ENCODE measurements at regions of chr12 and their contacts with region 1.

Region 1: DNA sequence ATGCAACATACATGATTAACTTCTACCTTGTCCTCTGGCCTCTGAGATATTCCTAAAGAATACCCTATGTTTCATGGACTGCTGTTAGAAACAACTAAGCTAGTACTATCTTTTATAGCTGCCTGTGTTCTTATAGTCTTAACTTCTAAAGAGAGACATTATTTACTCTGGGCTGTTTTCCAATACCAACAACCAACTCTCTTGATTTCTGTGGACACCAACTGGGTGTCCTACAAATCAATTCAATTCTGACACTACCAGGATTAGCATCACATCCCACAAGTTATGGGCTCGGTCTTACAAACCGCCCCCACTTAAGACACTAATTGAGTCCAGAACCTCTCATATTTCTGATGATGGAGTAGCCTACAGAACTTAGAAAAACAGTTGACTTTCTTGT is 8.3 kb downstream of the XPOT start:
- DNase-seq: no peak
- ATAC-seq: no peak
- H3K4me3 ChIP-seq: no peak overlapping the region
- H3K27ac ChIP-seq: no peak overlapping the region
- H3K4me1 ChIP-seq: peaks cover 3% of the 10 kb centered on the region in 2 donors
- H3K27me3 ChIP-seq: no peaks in the 10 kb centered on the region
- CTCF ChIP-seq: no peak
- POLR2A ChIP-seq: no peak

Region 2: DNA sequence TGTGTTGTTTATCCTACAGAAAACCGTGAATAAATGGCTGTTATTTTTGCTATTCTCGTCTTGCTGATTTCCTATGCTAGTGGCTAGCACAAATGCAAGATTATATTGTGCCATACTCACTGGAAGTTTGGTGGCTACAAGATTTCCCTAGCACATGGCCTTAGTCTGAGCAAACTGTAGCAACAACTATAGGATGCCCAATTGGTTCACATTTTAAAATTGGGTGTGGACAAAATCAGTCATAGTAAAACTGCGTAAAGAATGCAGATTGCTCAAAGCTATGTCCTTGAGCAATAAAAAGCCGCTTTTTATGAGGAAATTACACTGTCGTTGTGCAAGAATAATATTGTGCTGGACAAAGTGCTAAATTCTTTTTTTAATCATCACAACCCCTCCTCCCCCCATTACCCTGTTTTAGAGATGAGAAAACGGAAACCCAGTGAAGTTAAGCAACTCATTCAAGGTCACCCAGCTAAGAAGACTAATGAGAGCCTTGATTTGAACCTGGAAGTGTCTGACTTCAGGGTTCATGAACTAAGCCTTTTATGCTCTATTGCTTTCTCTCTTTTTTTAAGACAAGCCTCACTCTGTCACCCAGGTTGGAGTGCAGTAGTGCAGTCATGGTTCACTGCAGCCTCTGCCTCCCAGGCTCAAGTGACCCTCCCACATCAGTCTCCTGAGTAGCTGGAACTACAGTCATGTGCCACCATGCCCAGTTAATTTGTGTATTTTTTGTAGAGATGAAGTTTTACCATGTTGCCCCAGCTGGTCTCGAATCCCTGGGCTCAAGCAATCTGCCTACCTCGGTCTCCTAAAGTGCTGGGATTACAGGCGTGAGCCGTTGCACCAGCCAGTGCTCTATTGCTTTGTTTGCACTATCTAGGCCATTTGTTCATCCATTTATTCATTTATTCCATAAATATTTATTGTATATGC is 494.3 kb before region 1 on chr12:
- in situ Hi-C with region 1: no loop called
- intact Hi-C with region 1: no loop called
- DNase-seq: no peak
- ATAC-seq: peak; percentile 52 to 71
- H3K4me3 ChIP-seq: no peak overlapping the region
- H3K27ac ChIP-seq: no peak overlapping the region
- H3K4me1 ChIP-seq: no peaks in the 10 kb centered on the region
- H3K27me3 ChIP-seq: no peaks in the 10 kb centered on the region
- CTCF ChIP-seq: no peak
- POLR2A ChIP-seq: peak in 1 of 2 donors; percentile 9

Region 3: DNA sequence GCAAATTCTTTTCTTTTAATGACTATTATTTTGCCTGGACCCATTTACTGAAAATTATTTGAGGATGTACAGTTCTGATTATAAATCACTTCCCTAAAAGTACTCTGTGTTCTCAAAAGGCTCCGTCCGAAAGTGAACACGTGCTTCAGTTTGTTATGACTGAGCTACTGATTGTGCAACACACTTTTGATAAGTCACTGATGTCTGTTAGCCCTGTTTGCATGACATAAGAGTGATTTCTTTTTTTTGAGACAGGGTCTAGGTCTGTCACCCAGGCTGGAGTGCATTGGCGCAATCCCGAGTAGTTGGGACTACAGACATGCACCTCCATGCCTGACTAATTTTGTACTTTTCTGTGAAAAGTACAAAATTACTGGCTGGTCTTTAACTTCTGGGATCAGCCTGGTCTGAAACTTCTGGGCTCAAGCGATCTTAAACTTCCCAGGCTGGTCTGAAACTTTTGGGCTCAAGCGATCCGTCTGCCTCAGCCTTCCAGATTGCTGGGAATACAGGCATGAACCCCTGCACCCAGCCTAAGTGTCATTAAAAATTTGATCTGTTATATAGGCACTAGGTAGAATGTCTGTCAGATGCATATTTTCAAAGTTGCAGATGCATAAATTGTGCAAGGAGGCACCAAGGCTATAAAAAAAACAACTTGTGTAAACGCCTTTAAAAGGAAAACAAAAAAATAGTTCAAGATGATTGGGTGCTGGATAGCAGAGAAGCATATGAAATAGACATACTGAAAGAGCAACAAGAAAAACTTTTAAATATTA is 456.4 kb before region 1 on chr12:
- in situ Hi-C with region 1: no loop called
- intact Hi-C with region 1: no loop called
- DNase-seq: peak; percentile 45 to 53
- ATAC-seq: peak; percentile 92 to 94
- H3K4me3 ChIP-seq: no peak overlapping the region
- H3K27ac ChIP-seq: peak overlapping the region; percentile 39 to 69 (median 52)
- H3K4me1 ChIP-seq: peaks cover 0 to 10% of the 10 kb centered on the region in 2 donors
- H3K27me3 ChIP-seq: no peaks in the 10 kb centered on the region
- CTCF ChIP-seq: no peak
- POLR2A ChIP-seq: no peak

Region 4: GRCh38 chr12:64273527-64274403 is 138.7 kb before region 1 on chr12:
- in situ Hi-C with region 1: no loop called
- intact Hi-C with region 1: no loop called
- DNase-seq: no peak
- ATAC-seq: no peak
- H3K4me3 ChIP-seq: no peak overlapping the region
- H3K27ac ChIP-seq: no peak overlapping the region
- H3K4me1 ChIP-seq: no peaks in the 10 kb centered on the region
- H3K27me3 ChIP-seq: no peaks in the 10 kb centered on the region
- CTCF ChIP-seq: peak in 1 of 5 experiments; percentile 11
- POLR2A ChIP-seq: no peak

Region 5: DNA sequence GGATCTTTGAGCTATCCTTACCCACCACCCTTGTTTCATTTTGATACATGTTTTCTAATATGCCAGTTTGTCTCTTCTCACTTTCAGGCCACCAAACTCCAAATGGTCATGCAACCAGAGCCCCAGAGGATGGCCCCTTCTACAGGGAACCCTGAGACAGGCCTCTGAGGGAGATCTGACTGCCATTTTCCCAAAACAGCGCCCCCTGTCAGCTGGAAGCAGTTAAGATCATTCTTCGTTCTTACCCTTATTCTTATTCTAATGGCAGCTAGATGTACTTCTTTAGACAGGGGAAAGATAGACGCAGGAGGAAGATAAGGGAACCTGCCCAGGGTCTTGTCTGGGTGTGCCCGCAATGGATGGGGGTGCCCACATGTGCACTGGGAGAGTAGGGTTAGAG is 60.3 kb before region 1 on chr12:
- in situ Hi-C with region 1: no loop called
- intact Hi-C with region 1: no loop called
- DNase-seq: no peak
- ATAC-seq: no peak
- H3K4me3 ChIP-seq: no peak overlapping the region
- H3K27ac ChIP-seq: no peak overlapping the region
- H3K4me1 ChIP-seq: no peaks in the 10 kb centered on the region
- H3K27me3 ChIP-seq: no peaks in the 10 kb centered on the region
- CTCF ChIP-seq: no peak
- POLR2A ChIP-seq: no peak

Region 6: DNA sequence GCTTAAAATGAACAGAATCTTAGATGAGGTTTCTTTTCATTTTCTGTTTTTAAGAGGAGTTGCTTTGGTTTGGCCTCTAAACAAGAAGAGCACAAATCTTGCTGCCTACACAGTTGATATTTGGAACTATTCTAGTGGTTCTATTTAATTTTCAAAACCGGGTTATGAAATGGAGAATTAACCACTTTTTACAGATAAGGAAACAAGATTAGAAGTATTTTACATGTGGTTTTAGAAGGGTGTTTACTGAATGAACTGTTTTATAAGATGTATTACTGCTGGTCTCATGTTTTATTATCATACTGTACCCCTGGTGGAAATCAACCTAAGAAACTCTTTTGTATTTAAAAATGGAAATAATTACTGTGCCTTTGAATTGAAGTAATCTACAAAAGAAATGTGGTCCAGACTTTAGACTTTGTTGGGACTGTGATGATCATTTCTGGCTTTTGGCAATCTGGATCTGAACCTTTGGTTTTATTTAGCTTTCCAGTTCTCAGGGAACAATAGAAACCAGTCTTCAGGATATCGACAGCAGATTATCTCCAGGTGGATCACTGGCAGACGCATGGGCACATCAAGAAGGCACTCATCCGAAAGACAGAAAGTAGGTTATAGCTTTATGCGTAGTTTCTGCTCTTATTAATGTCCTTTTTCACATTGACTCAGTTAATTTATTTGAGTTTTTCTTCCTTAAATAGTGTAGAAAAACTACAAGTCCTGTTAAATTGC is 82.7 kb after region 1 on chr12:
- in situ Hi-C with region 1: loop called in 1 of 4 experiments (anchors 10 kb)
- intact Hi-C with region 1: loop called (anchors 10 kb)
- DNase-seq: no peak
- ATAC-seq: no peak
- H3K4me3 ChIP-seq: no peak overlapping the region
- H3K27ac ChIP-seq: no peak overlapping the region
- H3K4me1 ChIP-seq: no peaks in the 10 kb centered on the region
- H3K27me3 ChIP-seq: no peaks in the 10 kb centered on the region
- CTCF ChIP-seq: no peak
- POLR2A ChIP-seq: no peak